GM12878 (cell line): ENCODE measurements at regions of chr11 and their contacts with region 1.

Region 1: DNA sequence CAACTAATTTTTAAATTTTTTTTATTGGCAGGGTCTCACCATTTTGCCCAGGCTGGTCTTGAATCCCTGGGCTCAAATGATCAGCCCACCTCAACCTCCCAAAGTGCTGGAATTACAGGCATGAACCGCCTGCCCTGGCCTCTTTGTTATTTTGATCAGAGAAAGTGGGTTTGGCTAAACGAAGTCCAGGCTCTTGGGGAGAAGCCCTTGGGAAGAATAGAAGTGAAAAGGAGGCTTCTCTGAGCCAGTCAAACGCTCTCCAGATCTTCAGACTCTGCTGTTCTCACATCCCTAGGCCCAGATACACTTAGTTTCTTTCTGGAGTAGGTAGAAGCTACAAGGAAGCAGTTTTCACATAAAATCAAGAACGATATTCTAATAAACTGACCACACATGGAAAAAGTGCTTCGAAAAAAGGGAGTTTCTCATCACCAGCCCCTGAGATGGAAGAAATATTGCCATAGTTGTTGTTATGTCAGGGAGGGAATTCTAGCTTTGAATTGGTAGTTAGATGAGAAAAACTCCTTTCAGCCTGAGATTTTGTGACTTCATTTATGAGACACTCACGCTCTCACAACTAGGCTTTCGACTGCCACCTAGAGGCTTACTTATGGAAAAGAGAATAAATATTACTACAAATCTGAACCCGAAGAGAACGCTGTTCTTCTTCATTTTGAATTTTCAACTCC is 41.7 kb upstream of the AQP11 start:
- DNase-seq: peak; percentile 38
- ATAC-seq: peak; percentile 83
- H3K4me3 ChIP-seq: no peak overlapping the region
- H3K27ac ChIP-seq: no peak overlapping the region
- H3K4me1 ChIP-seq: no peaks in the 10 kb centered on the region
- H3K27me3 ChIP-seq: no peaks in the 10 kb centered on the region
- CTCF ChIP-seq: peak; percentile 46 to 76 (median 59); a peak in 5 of 6 replicates
- EP300 ChIP-seq: no peak
- POLR2A ChIP-seq: no peak
- RAD21 ChIP-seq: peak; percentile 92

Region 2: DNA sequence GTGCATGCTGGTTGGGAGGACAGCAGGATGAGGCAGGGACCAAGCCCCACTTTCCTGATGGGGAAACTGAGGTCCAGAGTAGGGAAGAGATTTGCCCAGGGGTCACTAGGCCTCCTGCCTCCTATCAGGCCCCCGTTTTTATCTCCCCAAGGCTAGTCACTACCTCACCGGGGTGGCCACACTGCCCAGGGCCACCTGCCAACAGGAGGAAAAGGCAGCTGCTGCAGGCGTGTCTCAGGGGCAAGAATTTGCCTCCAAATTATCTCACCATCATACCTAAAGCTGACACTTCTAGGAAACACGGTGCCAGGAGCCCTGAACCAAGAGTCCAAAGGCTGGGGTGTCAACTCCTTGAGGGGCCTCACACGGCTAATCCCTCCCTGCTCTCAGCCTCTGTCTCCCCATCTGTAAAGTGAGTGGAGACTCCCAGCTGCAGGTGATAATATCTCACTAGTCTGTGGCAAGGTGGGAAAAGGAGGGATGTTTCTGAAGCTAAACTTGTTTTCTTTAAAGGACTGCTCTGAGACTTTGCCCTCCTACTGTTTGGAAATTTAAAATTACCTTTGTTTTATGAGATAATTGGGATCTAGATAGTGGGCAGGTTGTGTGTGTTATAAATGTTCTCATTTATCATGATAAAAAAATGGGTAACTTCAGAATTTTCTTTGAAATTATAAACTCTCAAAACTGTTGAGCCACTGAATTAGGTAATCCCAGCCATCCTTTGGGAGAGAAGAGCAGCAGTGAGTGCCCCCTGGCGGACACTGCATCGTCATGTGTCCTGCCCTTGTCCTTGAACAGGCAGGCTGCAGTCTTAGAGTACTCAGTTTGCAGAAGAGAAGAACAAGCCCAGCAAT is 360.0 kb before region 1 on chr11:
- CTCF ChIA-PET with region 1: interaction called, 21 read pairs
- POLR2A ChIA-PET with region 1: no interaction called
- RAD21 ChIA-PET with region 1: interaction called, 4 read pairs
- SMC1A ChIA-PET with region 1: interaction called, 5 read pairs
- in situ Hi-C with region 1: no loop called
- intact Hi-C with region 1: loop called (anchors 2 kb)
- DNase-seq: peak; percentile 13
- ATAC-seq: peak; percentile 98
- H3K4me3 ChIP-seq: no peak overlapping the region
- H3K27ac ChIP-seq: no peak overlapping the region
- H3K4me1 ChIP-seq: no peaks in the 10 kb centered on the region
- H3K27me3 ChIP-seq: no peaks in the 10 kb centered on the region; a peak in 1 of 4 replicates
- CTCF ChIP-seq: peak; percentile 81 to 92 (median 86)
- EP300 ChIP-seq: no peak
- POLR2A ChIP-seq: no peak
- RAD21 ChIP-seq: peak; percentile 77

Region 3: GRCh38 chr11:77351281-77351906 is 196.6 kb before region 1 on chr11:
- CTCF ChIA-PET with region 1: interaction called, 5 read pairs
- POLR2A ChIA-PET with region 1: no interaction called
- RAD21 ChIA-PET with region 1: interaction called, 3 read pairs
- SMC1A ChIA-PET with region 1: interaction called, 3 read pairs
- in situ Hi-C with region 1: no loop called
- intact Hi-C with region 1: loop called (anchors 5 kb)
- DNase-seq: no peak
- ATAC-seq: no peak
- H3K4me3 ChIP-seq: no peak overlapping the region
- H3K27ac ChIP-seq: no peak overlapping the region; the same call in 1 of the 2 replicates
- H3K4me1 ChIP-seq: peaks cover 15% of the 10 kb centered on the region
- H3K27me3 ChIP-seq: no peaks in the 10 kb centered on the region
- CTCF ChIP-seq: no peak
- EP300 ChIP-seq: no peak
- POLR2A ChIP-seq: no peak
- RAD21 ChIP-seq: no peak

Region 4: DNA sequence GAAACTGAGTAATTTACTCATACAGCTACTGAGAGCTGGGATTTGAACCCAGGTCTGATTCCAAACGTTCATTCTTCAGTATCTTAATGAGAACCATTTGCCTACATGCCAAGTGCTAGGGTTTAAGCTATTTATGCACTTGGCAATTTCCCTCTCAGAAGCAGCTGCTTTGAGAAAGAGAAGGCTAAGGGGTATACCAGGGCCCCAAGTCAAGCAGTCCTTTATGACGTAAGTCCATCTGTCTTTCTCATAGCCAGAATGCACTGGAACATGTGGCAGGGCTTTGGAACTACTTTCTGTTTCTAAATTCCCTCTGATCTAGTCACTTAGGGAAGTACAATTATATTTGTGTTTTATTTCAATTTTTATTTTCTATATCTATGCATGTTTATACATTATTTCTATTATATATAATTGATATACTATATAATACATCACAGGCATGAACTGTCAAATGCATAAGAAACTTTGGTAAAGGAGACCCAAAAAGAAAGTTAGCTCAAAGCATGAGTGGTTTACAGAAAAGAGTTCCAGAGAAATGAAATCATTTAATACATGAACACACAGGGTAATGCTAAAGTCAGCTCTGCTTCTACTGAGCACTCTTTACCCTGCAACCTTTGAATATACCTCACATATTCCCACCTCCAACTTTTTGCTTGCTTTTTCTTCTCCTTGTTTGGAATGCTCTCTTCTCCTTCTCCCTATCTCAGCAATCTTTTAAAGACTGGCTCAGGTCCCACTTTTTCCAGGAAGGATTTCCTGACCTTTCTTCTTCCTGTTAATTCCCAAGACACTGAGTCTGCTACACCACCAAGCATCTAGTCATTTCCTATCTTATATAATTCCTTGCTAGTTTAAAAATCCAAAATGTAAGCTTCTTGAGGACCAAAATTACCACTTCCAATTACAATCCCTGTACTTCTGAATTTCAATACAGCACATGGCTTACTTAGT is 166.0 kb before region 1 on chr11:
- CTCF ChIA-PET with region 1: interaction called, 12 read pairs
- POLR2A ChIA-PET with region 1: no interaction called
- RAD21 ChIA-PET with region 1: interaction called, 3 read pairs
- SMC1A ChIA-PET with region 1: interaction called, 5 read pairs
- in situ Hi-C with region 1: no loop called
- intact Hi-C with region 1: no loop called
- DNase-seq: no peak
- ATAC-seq: no peak; the same call in 2 of the 3 replicates
- H3K4me3 ChIP-seq: no peak overlapping the region
- H3K27ac ChIP-seq: no peak overlapping the region
- H3K4me1 ChIP-seq: no peaks in the 10 kb centered on the region
- H3K27me3 ChIP-seq: no peaks in the 10 kb centered on the region
- CTCF ChIP-seq: no peak
- EP300 ChIP-seq: no peak
- POLR2A ChIP-seq: no peak
- RAD21 ChIP-seq: no peak

Region 5: DNA sequence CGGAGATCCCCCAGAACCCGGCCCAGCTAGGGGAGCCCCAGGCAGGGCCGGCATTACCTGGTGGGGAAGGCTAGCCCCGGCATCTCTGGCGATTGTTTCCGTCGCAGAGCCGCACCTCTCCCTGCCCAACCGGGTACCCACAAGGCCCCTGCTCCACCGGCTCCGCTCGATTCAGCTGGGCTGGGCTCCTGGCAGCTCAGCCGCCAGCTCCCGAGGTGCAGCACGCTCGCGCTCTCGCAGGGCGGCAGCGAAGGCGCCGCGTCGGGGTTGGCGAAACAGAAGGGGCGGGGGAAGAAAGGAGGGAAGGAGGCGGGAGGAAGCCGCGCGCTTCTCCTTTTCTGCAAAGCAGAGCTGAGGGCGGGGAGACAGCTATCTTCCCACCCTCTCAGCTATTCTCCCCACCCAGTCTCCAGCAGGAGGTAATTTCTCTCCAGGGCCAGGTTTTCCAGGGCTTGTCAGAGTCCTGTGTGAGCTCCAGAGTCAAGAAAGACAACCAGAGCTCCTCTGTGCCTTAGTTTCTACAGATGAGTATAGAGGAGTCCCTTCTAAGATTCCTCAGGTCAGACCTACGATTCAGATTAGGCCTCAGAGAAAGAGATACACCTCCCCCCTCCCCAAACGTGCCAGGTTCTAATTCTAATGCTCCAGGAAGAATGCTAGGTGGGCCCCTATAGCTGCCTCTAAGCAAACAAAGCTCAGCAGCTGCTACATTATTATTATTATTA is 136.1 kb before region 1 on chr11:
- CTCF ChIA-PET with region 1: interaction called, 43 read pairs
- POLR2A ChIA-PET with region 1: no interaction called
- RAD21 ChIA-PET with region 1: interaction called, 18 read pairs
- SMC1A ChIA-PET with region 1: interaction called, 14 read pairs
- in situ Hi-C with region 1: no loop called
- intact Hi-C with region 1: loop called (anchors 5 kb)
- DNase-seq: peak; percentile 40
- ATAC-seq: peak; percentile 93
- H3K4me3 ChIP-seq: peak overlapping the region; percentile 93
- H3K27ac ChIP-seq: peak overlapping the region; percentile 79
- H3K4me1 ChIP-seq: peaks cover 8% of the 10 kb centered on the region
- H3K27me3 ChIP-seq: no peaks in the 10 kb centered on the region
- CTCF ChIP-seq: peak; percentile 8 to 29 (median 19); a peak in 3 of 6 replicates
- EP300 ChIP-seq: no peak
- POLR2A ChIP-seq: peak; percentile 87
- RAD21 ChIP-seq: peak; percentile 44

Region 6: GRCh38 chr11:77561257-77561656 is 13.2 kb after region 1 on chr11:
- CTCF ChIA-PET with region 1: interaction called, 9 read pairs
- POLR2A ChIA-PET with region 1: no interaction called
- RAD21 ChIA-PET with region 1: interaction called, 4 read pairs
- SMC1A ChIA-PET with region 1: interaction called, 14 read pairs
- in situ Hi-C with region 1: no loop called
- intact Hi-C with region 1: no loop called
- DNase-seq: no peak
- ATAC-seq: no peak
- H3K4me3 ChIP-seq: no peak overlapping the region
- H3K27ac ChIP-seq: no peak overlapping the region
- H3K4me1 ChIP-seq: no peaks in the 10 kb centered on the region
- H3K27me3 ChIP-seq: no peaks in the 10 kb centered on the region
- CTCF ChIP-seq: no peak
- EP300 ChIP-seq: no peak
- POLR2A ChIP-seq: no peak
- RAD21 ChIP-seq: no peak